Caco-2 (cell line): ENCODE measurements at regions of chr11 and their contacts with region 1.

Region 1: DNA sequence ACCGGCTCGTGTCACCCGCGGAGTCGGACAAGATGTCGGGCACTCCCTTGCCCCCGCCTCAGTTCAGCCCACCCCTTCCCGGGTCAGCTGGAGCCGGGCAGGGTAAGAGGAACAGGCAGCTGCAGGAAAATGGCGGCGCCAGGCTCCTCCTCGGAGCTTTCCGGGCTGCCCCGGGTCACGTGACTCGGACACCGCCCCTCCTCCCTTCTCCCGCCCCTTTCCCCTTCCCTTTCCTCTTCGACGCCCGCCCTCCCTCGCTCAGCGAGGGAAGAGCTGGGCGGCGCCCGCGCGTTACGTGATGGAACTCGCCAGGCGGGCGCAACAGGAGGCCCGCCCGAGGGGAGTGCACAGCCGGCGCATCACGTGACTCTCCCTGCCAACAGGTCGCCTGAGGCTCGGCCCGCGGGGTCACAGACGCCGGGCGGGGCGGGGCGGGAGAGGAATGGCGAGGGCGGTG is at the start of gene PICALM:
- DNase-seq: peak; percentile 100
- H3K4me3 ChIP-seq: peak within 1 kb of the TSS; percentile 91
- H3K4me3 Mint-ChIP-seq: peak within 1 kb of the TSS; percentile 95
- H3K27ac Mint-ChIP-seq: peak within 1 kb of the TSS; percentile 85
- H3K4me1 ChIP-seq: peaks cover 24% of the 10 kb centered on the region
- H3K4me1 Mint-ChIP-seq: peaks cover 24% of the 10 kb centered on the region
- H3K27me3 ChIP-seq: no peaks in the 10 kb centered on the region
- H3K27me3 Mint-ChIP-seq: no peaks in the 10 kb centered on the region
- CTCF ChIP-seq: no peak
- total RNA-seq, gene PICALM: 321 and 331 TPM in 2 replicates

Region 2: DNA sequence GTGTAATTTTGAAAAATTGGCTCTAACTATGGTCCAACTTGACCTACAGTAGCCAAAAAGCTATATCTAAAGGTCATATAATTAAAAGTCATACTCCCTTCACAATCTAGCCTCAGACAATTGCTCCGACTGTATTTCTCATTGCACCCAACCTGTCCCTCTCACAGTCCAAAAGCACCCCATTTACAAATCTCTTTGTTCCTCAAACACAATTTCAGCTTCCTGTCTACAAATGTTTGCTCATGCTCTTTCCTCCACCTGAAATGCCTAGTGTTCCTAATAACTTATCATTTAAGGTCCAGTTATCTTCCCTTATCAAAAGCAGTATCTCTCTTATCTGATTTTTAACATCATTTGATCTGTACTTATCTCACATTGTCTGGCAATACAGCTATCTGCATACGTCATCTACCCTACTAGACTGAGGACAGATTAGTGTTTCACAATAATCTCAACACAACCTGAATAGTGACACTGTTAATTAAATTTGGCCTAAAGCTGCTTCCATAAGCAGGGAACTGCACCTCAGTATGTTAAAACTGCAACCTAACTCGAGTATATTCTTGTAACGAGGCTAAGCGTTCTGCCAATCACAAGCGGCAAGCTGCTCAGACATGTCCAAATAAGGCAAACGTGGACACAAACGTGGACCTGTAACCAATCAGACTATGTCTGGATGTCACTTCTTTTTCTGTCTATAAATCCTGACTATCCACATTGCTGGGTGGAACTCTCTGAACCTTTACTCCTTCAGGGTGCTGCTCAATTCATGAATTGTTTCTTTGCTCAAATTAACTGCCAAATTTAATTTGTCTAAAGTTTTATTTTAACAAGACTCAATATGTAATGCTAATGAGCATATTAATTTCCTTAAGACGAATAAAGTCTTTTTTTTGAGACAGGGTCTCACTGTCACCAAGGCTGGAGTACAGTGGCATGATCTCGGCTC is 16.0 kb before region 1 on chr11:
- CTCF ChIA-PET with region 1: interaction called, 7 read pairs
- POLR2A ChIA-PET with region 1: interaction called, 24 read pairs
- intact Hi-C with region 1: loop called (anchors 1 kb)
- DNase-seq: peak; percentile 65 to 75
- H3K4me3 ChIP-seq: no peak overlapping the region
- H3K4me3 Mint-ChIP-seq: peak overlapping the region; percentile 22
- H3K27ac Mint-ChIP-seq: peak overlapping the region; percentile 29
- H3K4me1 ChIP-seq: peaks cover 29% of the 10 kb centered on the region
- H3K4me1 Mint-ChIP-seq: peaks cover 26% of the 10 kb centered on the region
- H3K27me3 ChIP-seq: no peaks in the 10 kb centered on the region
- H3K27me3 Mint-ChIP-seq: no peaks in the 10 kb centered on the region
- CTCF ChIP-seq: no peak

Region 3: GRCh38 chr11:86124834-86125233 is 55.9 kb after region 1 on chr11:
- CTCF ChIA-PET with region 1: interaction called, 3 read pairs
- POLR2A ChIA-PET with region 1: interaction called, 6 read pairs
- intact Hi-C with region 1: loop called (anchors 1 kb)
- DNase-seq: no peak
- H3K4me3 ChIP-seq: peak overlapping the region; percentile 0; the same call in 1 of the 2 replicates
- H3K4me3 Mint-ChIP-seq: peak overlapping the region; percentile 57
- H3K27ac Mint-ChIP-seq: peak overlapping the region; percentile 60
- H3K4me1 ChIP-seq: peaks cover 94% of the 10 kb centered on the region
- H3K4me1 Mint-ChIP-seq: peaks cover 63% of the 10 kb centered on the region
- H3K27me3 ChIP-seq: no peaks in the 10 kb centered on the region
- H3K27me3 Mint-ChIP-seq: no peaks in the 10 kb centered on the region
- CTCF ChIP-seq: no peak

Region 4: DNA sequence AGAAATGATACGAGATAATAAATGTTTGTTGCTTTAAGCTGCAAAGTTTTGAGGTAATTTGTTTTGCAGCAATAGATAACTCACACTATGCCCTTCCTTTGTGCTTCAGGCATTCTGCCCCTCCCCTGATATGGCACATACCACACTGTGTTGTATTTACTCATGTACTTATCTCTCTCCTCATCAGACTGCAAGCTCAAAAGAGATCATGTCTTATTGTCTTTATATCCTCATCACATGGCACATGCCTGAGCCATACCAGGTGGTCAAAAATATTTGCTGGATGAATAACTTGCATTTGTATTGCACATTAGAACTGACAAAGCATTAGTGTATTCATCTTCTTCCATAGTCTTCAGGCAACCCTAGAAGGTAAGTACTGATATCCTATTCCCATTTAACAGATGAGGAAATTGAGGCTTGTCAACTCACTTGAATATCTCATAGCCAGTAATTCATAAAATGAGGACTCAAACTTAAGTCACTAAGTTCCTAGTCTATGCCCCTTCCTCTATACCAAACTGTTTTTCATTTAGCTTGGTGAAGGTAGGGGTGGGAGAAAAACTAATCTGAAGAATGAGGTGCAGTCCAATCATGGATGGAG is 91.7 kb after region 1 on chr11:
- CTCF ChIA-PET with region 1: interaction called, 10 read pairs
- POLR2A ChIA-PET with region 1: interaction called, 15 read pairs
- intact Hi-C with region 1: loop called (anchors 1 kb)
- DNase-seq: peak; percentile 83 to 89
- H3K4me3 ChIP-seq: no peak overlapping the region
- H3K4me3 Mint-ChIP-seq: no peak overlapping the region
- H3K27ac Mint-ChIP-seq: peak overlapping the region; percentile 7
- H3K4me1 ChIP-seq: peaks cover 67% of the 10 kb centered on the region
- H3K4me1 Mint-ChIP-seq: peaks cover 62% of the 10 kb centered on the region
- H3K27me3 ChIP-seq: no peaks in the 10 kb centered on the region
- H3K27me3 Mint-ChIP-seq: no peaks in the 10 kb centered on the region
- CTCF ChIP-seq: no peak

Region 5: GRCh38 chr11:86218125-86219084 is 149.4 kb after region 1 on chr11:
- CTCF ChIA-PET with region 1: interaction called, 3 read pairs
- POLR2A ChIA-PET with region 1: interaction called, 5 read pairs
- intact Hi-C with region 1: loop called (anchors 1 kb)
- DNase-seq: peak; percentile 74 to 88
- H3K4me3 ChIP-seq: no peak overlapping the region
- H3K4me3 Mint-ChIP-seq: peak overlapping the region; percentile 15
- H3K27ac Mint-ChIP-seq: peak overlapping the region; percentile 25
- H3K4me1 ChIP-seq: peaks cover 12% of the 10 kb centered on the region
- H3K4me1 Mint-ChIP-seq: peaks cover 22% of the 10 kb centered on the region
- H3K27me3 ChIP-seq: no peaks in the 10 kb centered on the region
- H3K27me3 Mint-ChIP-seq: no peaks in the 10 kb centered on the region
- CTCF ChIP-seq: peak; percentile 98

Region 6: GRCh38 chr11:86302100-86302793 is 233.3 kb after region 1 on chr11 and contains the start of gene HIKESHI:
- CTCF ChIA-PET with region 1: no interaction called
- POLR2A ChIA-PET with region 1: no interaction called
- intact Hi-C with region 1: loop called (anchors 1 kb)
- DNase-seq: peak; percentile 98 to 99
- H3K4me3 ChIP-seq: peak within 1 kb of the TSS; percentile 58
- H3K4me3 Mint-ChIP-seq: peak within 1 kb of the TSS; percentile 98
- H3K27ac Mint-ChIP-seq: peak within 1 kb of the TSS; percentile 99
- H3K4me1 ChIP-seq: 0 out of 2 replicates have a peak, but pooled peaks cover 10% of the 10 kb centered on the region
- H3K4me1 Mint-ChIP-seq: peaks cover 8% of the 10 kb centered on the region
- H3K27me3 ChIP-seq: no peaks in the 10 kb centered on the region
- H3K27me3 Mint-ChIP-seq: no peaks in the 10 kb centered on the region
- CTCF ChIP-seq: no peak
- total RNA-seq, gene HIKESHI: 81.3 and 82.0 TPM in 2 replicates

Region 7: GRCh38 chr11:86395061-86395551 is 326.1 kb after region 1 on chr11:
- CTCF ChIA-PET with region 1: no interaction called
- POLR2A ChIA-PET with region 1: no interaction called
- intact Hi-C with region 1: no loop called
- DNase-seq: no peak
- H3K4me3 ChIP-seq: no peak overlapping the region
- H3K4me3 Mint-ChIP-seq: no peak overlapping the region
- H3K27ac Mint-ChIP-seq: no peak overlapping the region
- H3K4me1 ChIP-seq: no peaks in the 10 kb centered on the region
- H3K4me1 Mint-ChIP-seq: no peaks in the 10 kb centered on the region
- H3K27me3 ChIP-seq: no peaks in the 10 kb centered on the region
- H3K27me3 Mint-ChIP-seq: no peaks in the 10 kb centered on the region
- CTCF ChIP-seq: no peak